Dorsolateral prefrontal cortex (tissue), 120 donors: ENCODE measurements at regions of chr1 and their contacts with region 1.

Region 1: GRCh38 chr1:242454262-242455045 is 70.0 kb downstream of the PLD5 start:
- DNase-seq: peak in 1 of 10 donors; percentile 31
- H3K4me3 ChIP-seq: peak overlapping the region in 2 of 59 donors; percentile 12 to 13
- H3K27ac ChIP-seq: no peak overlapping the region
- H3K27me3 ChIP-seq: peaks cover 0 to 4% (median 0%) of the 10 kb centered on the region in 45 donors
- CTCF ChIP-seq: peak; percentile 46 to 83 (median 73)

Region 2: GRCh38 chr1:242023805-242024204 is 430.6 kb before region 1 on chr1:
- intact Hi-C with region 1: loop called in 1 of 2 experiments (anchors 5 kb)
- DNase-seq: no peak
- H3K4me3 ChIP-seq: no peak overlapping the region
- H3K27ac ChIP-seq: no peak overlapping the region
- H3K27me3 ChIP-seq: no peaks in the 10 kb centered on the region
- CTCF ChIP-seq: no peak

Region 3: GRCh38 chr1:242239394-242239793 is 215.1 kb before region 1 on chr1:
- intact Hi-C with region 1: loop called in 1 of 2 experiments (anchors 10 kb)
- DNase-seq: no peak
- H3K4me3 ChIP-seq: no peak overlapping the region
- H3K27ac ChIP-seq: peak overlapping the region in 1 of 59 donors; percentile 11
- H3K27me3 ChIP-seq: peaks cover 0 to 7% (median 0%) of the 10 kb centered on the region in 45 donors
- CTCF ChIP-seq: no peak